ENCODE measurements at regions of chr14 and their contacts with region 1.

Region 1: GRCh38 chr14:50060871-50061663 is 55.3 kb downstream of the VCPKMT start:
- DNase-seq: peak; percentile 31 to 77
- H3K4me3 ChIP-seq: peak overlapping the region; percentile 37; the same call in 1 of the 2 replicates
- H3K27ac ChIP-seq: peak overlapping the region; percentile 97
- H3K4me1 ChIP-seq: peaks cover 49% of the 10 kb centered on the region
- H3K27me3 ChIP-seq: no peaks in the 10 kb centered on the region
- CTCF ChIP-seq: no peak

Region 2: DNA sequence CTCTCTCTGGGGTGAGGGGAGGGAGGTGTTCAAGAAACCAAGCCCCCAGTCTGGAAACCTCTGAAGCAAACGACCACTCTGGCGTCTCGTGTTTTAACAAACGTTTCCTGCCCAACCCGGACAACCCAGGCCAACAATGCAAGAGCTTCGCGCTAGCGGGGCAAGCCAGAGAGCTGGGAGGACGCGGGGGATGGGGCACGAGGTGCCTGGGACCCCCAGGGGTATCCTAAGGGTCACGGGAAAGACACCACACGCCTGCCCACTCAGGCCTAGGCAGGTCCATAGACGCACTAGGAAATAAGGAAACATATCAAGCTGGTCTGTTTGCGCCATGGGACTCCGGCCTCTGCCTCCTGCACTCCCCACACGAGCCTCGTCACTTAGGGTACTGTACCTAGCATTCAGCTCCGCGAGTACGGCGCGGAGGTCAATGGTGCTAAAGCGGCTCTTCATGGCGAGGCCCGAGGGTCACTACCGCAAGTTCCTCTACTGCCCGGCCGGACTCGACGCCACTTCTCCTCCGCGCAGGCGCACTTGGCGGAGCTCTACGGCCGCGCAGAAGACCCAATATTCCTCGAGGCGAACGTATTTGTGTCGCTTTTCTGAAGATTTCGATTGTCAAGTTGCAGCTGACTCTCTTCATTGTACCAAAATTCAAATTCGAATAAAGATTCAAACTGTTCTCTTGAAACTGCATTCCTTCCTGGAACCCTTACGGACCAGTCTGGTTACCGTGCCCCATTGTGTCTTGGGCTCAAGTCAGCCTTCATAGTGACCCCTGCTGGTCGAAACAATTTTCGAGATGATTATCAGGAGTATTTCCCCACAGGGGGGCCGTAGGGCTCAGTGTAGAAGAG is 208.5 kb before region 1 on chr14 and contains the start of gene NEMF:
- CTCF ChIA-PET with region 1: no interaction called
- POLR2A ChIA-PET with region 1: no interaction called
- intact Hi-C with region 1: loop called (anchors 2 kb)
- DNase-seq: peak; percentile 58 to 85
- H3K4me3 ChIP-seq: peak within 1 kb of the TSS; percentile 84
- H3K27ac ChIP-seq: peak within 1 kb of the TSS; percentile 53
- H3K4me1 ChIP-seq: peaks cover 32% of the 10 kb centered on the region
- H3K27me3 ChIP-seq: no peaks in the 10 kb centered on the region
- CTCF ChIP-seq: peak; percentile 89
- total RNA-seq, gene NEMF: 49.7 and 67.6 TPM in 2 replicates

Region 3: GRCh38 chr14:49867831-49868723 is 193.0 kb before region 1 on chr14:
- CTCF ChIA-PET with region 1: interaction called, 9 read pairs
- POLR2A ChIA-PET with region 1: interaction called, 16 read pairs
- intact Hi-C with region 1: no loop called
- DNase-seq: peak; percentile 88 to 94
- H3K4me3 ChIP-seq: peak overlapping the region; percentile 85
- H3K27ac ChIP-seq: peak overlapping the region; percentile 78
- H3K4me1 ChIP-seq: peaks cover 32% of the 10 kb centered on the region
- H3K27me3 ChIP-seq: no peaks in the 10 kb centered on the region
- CTCF ChIP-seq: no peak

Region 4: DNA sequence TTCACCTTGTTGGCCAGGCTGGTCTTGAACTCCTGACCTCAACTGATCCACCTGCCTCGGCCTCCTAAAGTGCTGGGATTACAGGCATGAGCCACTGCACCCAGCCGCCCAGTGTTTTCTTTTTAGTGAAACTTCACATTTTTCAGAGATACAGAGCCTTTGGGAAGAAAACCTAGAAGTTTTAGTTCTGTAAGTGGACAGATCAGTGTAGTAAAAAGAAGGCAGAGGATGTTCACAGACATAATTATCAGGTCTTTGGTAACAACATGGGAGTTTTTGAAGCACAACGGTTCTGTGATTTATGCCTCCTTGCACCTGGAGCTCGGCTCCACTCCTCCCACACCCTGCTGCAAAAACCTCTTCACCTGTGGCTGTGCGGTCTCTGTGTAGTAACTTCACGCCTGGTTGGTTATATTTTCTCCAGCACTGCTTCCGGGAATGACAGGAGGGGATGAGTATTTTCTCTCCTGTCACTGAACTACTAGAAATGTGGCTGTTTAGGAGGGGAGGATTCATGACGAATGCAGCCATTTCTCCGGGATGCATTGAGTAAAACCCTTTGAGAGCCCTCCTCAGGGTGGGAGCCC is 101.2 kb before region 1 on chr14:
- CTCF ChIA-PET with region 1: no interaction called
- POLR2A ChIA-PET with region 1: no interaction called
- intact Hi-C with region 1: loop called (anchors 1 kb)
- DNase-seq: peak; percentile 70 to 88
- H3K4me3 ChIP-seq: no peak overlapping the region
- H3K27ac ChIP-seq: peak overlapping the region; percentile 88
- H3K4me1 ChIP-seq: peaks cover 53% of the 10 kb centered on the region
- H3K27me3 ChIP-seq: no peaks in the 10 kb centered on the region
- CTCF ChIP-seq: no peak

Region 5: DNA sequence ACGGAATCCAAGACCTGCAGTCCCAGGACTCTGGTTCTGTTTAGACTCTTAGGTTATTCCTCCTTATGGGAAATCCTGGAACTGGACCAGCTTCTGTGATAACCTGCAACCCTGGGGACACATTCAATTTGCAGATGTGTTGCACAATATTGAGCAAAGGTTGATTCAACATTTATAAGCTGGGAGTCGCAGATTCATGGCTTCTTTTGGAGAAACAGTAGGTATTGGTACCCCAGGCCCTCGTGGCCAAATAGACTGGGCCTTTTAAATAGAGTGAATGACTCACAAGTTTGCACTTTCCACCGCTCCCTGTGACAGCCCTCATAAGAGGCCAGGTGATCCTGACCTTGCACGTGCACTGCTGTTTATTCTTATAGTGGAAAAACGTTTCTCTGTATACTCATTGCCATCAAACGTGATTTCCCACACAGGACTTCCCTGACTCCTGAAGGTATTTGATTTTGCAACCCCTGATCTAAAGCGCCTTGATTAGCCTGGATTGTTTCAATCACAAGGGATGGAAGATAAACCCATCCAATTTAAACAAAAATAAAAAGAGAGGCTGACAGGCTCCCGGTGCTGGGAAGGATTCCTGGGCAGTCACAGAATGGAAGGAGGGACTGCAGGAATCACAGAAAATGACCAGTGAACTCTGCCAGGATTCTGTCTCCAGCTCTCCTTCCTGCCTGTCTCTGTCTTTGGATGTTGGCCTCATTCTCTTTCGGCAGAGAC is 42.7 kb before region 1 on chr14:
- CTCF ChIA-PET with region 1: no interaction called
- POLR2A ChIA-PET with region 1: no interaction called
- intact Hi-C with region 1: loop called (anchors 1 kb)
- DNase-seq: peak; percentile 43 to 88
- H3K4me3 ChIP-seq: no peak overlapping the region
- H3K27ac ChIP-seq: peak overlapping the region; percentile 72
- H3K4me1 ChIP-seq: peaks cover 52% of the 10 kb centered on the region
- H3K27me3 ChIP-seq: no peaks in the 10 kb centered on the region
- CTCF ChIP-seq: no peak

Region 6: DNA sequence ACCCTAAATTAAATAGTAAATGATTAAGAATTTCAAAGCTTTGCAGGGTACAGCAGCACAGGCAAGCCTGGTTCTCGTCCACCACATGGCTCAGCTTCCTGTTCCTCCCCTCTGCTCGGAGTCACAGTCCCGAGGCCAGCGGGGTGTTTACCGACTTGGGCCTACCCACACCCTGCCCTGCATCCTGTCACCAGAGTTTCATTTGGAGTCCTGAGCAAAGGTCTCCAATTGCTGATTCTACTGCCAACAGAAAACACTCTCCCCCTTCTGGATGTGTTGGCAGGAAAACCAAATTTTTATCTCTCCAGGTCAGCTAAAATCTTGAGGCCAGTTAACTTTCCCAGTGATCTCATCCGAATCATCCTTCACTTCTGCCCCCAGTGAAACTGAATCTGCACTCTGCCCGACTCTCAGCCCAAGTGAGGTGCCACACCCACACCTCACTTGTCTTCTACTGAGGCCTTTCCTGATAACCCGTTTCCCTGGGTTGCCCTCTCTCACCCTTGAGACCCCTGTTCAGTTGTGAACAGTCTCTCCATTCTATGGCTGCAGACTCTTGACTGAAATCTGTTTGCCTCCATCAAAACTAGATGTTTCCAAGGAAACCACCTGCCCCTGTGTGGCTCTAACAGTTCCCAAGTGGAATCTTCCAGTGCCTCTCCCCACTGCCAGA is 15.9 kb before region 1 on chr14:
- CTCF ChIA-PET with region 1: interaction called, 6 read pairs
- POLR2A ChIA-PET with region 1: interaction called, 4 read pairs
- intact Hi-C with region 1: loop called (anchors 1 kb)
- DNase-seq: peak; percentile 63 to 89
- H3K4me3 ChIP-seq: no peak overlapping the region
- H3K27ac ChIP-seq: peak overlapping the region; percentile 99
- H3K4me1 ChIP-seq: peaks cover 81% of the 10 kb centered on the region
- H3K27me3 ChIP-seq: no peaks in the 10 kb centered on the region
- CTCF ChIP-seq: no peak

Region 7: DNA sequence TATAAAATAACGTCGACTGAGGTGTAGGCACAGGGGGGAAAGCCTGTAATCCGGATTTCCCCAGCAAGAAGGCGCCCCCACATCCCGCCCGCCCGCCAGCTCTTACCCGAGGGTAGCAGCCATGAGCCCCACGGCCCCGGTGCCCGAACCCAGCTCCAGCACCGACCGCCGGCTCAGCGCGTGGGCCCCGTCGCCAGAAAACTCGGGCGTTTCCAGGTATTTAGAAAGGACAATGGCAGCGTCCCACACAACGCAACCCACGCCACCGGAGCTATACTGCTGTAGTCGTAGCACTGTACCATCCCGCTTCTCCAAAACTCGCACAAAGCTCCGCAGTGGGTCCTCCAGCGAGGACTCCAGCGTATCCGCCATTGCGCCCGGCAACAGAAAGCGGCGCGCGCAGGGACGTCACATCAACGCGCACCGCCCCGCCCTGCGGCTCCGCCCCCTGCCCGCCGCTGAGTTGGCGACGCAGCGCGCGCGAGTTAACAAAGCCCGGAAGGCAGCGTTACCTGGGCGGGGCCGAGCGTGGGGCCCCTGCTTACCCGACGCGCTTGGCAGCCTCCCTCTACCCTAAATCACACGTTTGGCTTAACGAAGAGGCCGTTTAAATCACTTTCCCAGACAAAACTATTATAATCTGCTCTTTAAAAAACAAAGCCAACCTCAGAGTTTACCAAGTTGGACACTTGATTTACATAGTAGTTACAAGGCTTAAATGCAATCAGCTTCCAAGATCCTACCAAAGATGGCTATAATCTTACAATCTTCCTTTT is 55.3 kb after region 1 on chr14 and contains the start of gene VCPKMT:
- CTCF ChIA-PET with region 1: interaction called, 14 read pairs
- POLR2A ChIA-PET with region 1: no interaction called
- intact Hi-C with region 1: no loop called
- DNase-seq: peak; percentile 79 to 93
- H3K4me3 ChIP-seq: peak within 1 kb of the TSS; percentile 84
- H3K27ac ChIP-seq: peak within 1 kb of the TSS; percentile 66
- H3K4me1 ChIP-seq: peaks cover 22% of the 10 kb centered on the region
- H3K27me3 ChIP-seq: no peaks in the 10 kb centered on the region
- CTCF ChIP-seq: no peak
- total RNA-seq, gene VCPKMT: 6.5 and 9.4 TPM in 2 replicates

Measured in PC-9 (cell line).